Activated T-helper 1 cell treated with anti-CD3 and anti-CD28 coated beads, Interleukin-12 subunit alpha, Interleukin-12 subunit beta, Interleukin-2, Interleukin-4 antibody, amounts not matched to agents 30 ng/mL and 10 ng/mL and 1 ng/mL, durations not matched to agents 14 hours and 24 hours and 36 hours (primary cell): ENCODE measurements at regions of chr3 and their contacts with region 1.

Region 1: GRCh38 chr3:11643605-11644087 is at the start of gene VGLL4:
- DNase-seq: peak; percentile 59
- H3K4me3 Mint-ChIP-seq: peak within 1 kb of the TSS; percentile 95
- H3K27ac Mint-ChIP-seq: peak within 1 kb of the TSS; percentile 96
- H3K4me1 Mint-ChIP-seq: peaks cover 38% of the 10 kb centered on the region
- H3K27me3 Mint-ChIP-seq: peaks cover 17% of the 10 kb centered on the region
- total RNA-seq, gene VGLL4: 46.0 and 48.7 TPM in 2 replicates

Region 2: DNA sequence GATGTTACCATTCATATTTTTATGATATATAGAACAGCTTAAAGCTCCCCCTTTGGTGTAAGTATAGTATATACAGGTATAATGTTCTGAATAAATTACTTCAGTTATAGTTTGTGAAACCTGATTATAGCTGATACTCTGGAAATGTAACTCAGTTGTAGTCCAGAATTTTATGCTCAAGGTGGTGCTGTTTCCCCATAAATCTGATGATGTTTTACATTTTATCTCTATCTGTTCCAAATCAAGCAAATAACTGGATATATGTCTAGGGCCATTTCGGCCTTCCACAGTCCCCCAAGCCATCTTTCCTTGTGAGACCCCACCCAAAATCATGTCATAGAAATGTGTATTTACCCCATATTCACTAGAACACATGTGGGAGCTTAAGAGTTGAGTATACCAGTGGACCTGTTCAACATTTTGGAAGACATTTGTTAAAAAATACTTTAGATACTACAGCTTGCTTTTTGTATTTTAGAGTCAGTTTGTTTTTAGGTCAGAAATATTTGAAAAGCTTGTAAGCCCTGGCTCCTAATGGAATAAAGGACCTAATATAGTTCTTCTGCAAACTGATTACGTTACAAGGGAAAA is 264.3 kb before region 1 on chr3:
- intact Hi-C with region 1: loop called (anchors 2 kb)
- DNase-seq: no peak
- H3K4me3 Mint-ChIP-seq: no peak overlapping the region
- H3K27ac Mint-ChIP-seq: no peak overlapping the region
- H3K4me1 Mint-ChIP-seq: no peaks in the 10 kb centered on the region
- H3K27me3 Mint-ChIP-seq: no peaks in the 10 kb centered on the region

Region 3: DNA sequence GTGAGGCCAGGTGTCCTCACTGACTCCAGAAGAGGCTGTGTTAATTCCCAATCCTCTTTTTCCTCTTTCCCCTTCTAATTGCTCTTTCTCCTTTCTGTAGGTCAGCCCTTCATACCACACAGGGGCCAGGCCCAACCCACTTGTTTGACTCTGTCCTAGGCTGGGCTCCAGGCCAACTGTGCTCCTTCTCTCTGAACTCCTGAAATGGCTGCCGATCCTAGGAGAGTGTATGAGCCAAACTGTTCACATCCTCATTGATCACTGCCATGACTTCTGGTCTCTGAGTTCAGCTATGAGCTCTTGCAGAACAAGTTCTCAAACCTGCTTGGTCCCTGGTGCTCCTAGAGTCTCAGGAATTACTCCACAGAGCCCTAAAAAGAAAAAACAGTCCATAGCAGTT is 145.0 kb before region 1 on chr3:
- intact Hi-C with region 1: no loop called
- DNase-seq: no peak
- H3K4me3 Mint-ChIP-seq: no peak overlapping the region
- H3K27ac Mint-ChIP-seq: no peak overlapping the region
- H3K4me1 Mint-ChIP-seq: peaks cover 4% of the 10 kb centered on the region
- H3K27me3 Mint-ChIP-seq: no peaks in the 10 kb centered on the region

Region 4: DNA sequence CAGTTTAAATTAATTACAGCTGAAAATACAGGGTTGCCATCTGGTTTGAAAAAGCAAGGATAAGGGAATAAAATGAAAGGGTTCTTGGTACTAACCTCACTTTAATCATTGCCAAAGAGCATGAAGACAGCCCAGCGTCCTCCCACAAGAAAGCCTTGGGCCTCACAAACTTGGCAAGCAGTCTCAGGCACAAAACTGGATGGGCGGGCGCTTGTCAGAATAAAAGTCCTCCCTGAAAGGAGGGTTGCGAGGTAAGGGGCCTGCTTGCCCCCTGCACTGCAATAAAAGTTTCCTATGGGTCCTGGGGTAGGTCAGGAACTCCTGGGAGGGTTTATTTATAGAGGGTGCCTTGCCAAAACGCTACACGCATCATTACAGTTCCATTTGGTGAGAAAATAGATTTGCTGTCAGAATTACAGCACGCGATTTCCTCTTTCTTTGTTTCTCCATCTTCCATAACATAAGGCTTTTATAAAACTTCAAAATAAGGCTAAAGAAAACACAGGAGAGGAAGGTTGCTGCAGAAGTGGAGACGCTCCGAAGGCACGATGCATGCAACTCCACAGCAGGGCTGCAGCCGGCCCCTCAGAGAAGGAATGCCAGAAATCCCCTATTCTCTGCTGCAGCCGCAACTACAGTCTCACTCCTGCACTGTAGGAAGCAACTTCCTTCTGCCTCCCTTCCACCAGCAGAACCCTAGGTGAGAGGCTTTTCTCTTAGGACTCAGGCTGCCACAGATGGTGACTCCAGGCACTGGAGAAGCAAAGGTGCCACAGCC is 61.3 kb before region 1 on chr3:
- intact Hi-C with region 1: loop called (anchors 5 kb)
- DNase-seq: no peak
- H3K4me3 Mint-ChIP-seq: no peak overlapping the region
- H3K27ac Mint-ChIP-seq: no peak overlapping the region
- H3K4me1 Mint-ChIP-seq: peaks cover 25% of the 10 kb centered on the region
- H3K27me3 Mint-ChIP-seq: no peaks in the 10 kb centered on the region

Region 5: GRCh38 chr3:11626084-11626463 is 17.6 kb before region 1 on chr3:
- intact Hi-C with region 1: loop called (anchors 1 kb)
- DNase-seq: peak; percentile 42
- H3K4me3 Mint-ChIP-seq: peak overlapping the region; percentile 39
- H3K27ac Mint-ChIP-seq: peak overlapping the region; percentile 71
- H3K4me1 Mint-ChIP-seq: peaks cover 69% of the 10 kb centered on the region
- H3K27me3 Mint-ChIP-seq: no peaks in the 10 kb centered on the region

Region 6: GRCh38 chr3:11846281-11847034 is 202.8 kb after region 1 on chr3 and contains the start of gene TAMM41:
- intact Hi-C with region 1: loop called (anchors 5 kb)
- DNase-seq: peak; percentile 86
- H3K4me3 Mint-ChIP-seq: peak within 1 kb of the TSS; percentile 96
- H3K27ac Mint-ChIP-seq: peak within 1 kb of the TSS; percentile 93
- H3K4me1 Mint-ChIP-seq: peaks cover 26% of the 10 kb centered on the region
- H3K27me3 Mint-ChIP-seq: no peaks in the 10 kb centered on the region
- total RNA-seq, gene TAMM41: 35.2 and 38.0 TPM in 2 replicates